ENCODE measurements at regions of chr1 and their contacts with region 1.

Region 1: DNA sequence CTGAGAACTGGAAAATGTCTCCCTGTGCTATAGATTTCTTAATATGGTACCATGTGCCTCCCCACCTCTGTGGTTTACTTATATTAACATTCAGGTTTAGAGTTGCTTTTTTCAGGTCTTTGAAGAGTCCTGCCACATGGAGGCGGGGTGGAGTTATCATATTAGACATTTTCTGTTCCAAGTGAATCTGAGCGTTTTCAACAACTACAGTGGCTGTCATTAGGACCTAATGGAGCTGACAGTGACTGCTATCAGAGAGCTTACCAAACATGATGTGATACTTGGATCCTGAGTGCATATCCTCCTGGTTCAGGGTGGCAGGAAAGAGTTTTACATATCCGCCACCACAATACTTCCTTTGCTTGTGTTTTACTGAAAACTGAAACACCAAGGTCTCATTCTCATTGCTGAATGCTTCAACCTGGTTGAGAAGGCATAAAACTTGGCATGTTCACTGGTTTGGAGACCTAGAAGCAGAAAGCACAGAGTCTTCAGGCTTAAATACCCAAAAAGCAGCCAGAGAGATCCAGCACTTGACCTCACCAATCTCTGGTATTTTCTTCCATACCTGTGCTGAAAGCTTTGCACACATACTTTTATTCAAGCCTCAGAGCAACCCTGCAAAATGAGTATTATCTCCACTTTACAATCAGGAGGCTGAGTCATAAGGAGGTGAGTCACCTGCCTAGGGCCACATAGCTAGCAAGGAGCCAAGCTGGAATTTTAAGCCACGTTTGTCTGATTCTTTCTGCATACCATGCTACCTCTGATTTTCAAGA is 47.4 kb upstream of the OSBPL9 start:
- DNase-seq: peak; percentile 71
- H3K4me3 ChIP-seq: peak overlapping the region; percentile 8
- H3K27ac ChIP-seq: no peak overlapping the region
- H3K4me1 ChIP-seq: peaks cover 24% of the 10 kb centered on the region
- CTCF ChIP-seq: peak; percentile 65

Region 2: GRCh38 chr1:51541313-51542174 is 27.9 kb before region 1 on chr1:
- CTCF ChIA-PET with region 1: no interaction called
- POLR2A ChIA-PET with region 1: no interaction called
- intact Hi-C with region 1: no loop called
- DNase-seq: no peak
- H3K4me3 ChIP-seq: no peak overlapping the region
- H3K27ac ChIP-seq: no peak overlapping the region
- H3K4me1 ChIP-seq: no peaks in the 10 kb centered on the region
- CTCF ChIP-seq: no peak

Region 3: GRCh38 chr1:51729156-51729823 is 159.8 kb after region 1 on chr1:
- CTCF ChIA-PET with region 1: no interaction called
- POLR2A ChIA-PET with region 1: interaction called, 4 read pairs
- intact Hi-C with region 1: loop called (anchors 1 kb)
- DNase-seq: peak; percentile 98
- H3K4me3 ChIP-seq: peak overlapping the region; percentile 83
- H3K27ac ChIP-seq: peak overlapping the region; percentile 67
- H3K4me1 ChIP-seq: peaks cover 48% of the 10 kb centered on the region
- CTCF ChIP-seq: no peak

Region 4: DNA sequence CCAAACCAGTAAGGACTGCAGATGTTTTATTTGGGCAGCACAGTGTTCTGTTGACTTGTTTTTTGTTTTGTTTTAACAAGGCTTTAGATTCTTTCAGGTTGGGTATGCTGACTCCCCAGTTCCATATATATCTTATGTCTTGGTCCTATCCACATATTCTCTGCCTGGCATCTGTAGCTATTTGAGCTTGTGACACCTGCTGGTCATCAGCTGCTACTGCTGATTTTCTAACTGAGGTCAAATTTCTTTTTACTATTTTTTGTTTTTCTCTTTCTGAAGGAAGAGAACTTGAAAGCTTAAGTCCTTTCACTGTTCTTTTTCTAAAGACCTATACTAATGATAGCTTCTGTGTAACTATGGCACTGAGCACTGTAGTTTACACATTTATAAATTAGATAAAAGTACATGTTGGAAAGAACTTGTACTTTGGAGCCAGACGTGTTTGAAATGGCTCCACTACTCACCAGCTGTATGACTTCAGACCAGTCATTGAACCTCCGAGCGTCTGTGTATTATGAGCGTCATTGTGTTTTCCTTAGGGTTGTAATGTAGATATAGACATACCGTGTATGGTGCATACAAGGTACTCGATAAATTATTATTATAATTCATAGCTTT is 199.6 kb after region 1 on chr1:
- CTCF ChIA-PET with region 1: no interaction called
- POLR2A ChIA-PET with region 1: interaction called, 3 read pairs
- intact Hi-C with region 1: loop called (anchors 1 kb)
- DNase-seq: peak; percentile 73
- H3K4me3 ChIP-seq: no peak overlapping the region
- H3K27ac ChIP-seq: no peak overlapping the region
- H3K4me1 ChIP-seq: no peaks in the 10 kb centered on the region
- CTCF ChIP-seq: peak; percentile 95